Sigmoid colon (tissue), 7 donors: ENCODE measurements at regions of chr13 and their contacts with region 1.

Region 1: DNA sequence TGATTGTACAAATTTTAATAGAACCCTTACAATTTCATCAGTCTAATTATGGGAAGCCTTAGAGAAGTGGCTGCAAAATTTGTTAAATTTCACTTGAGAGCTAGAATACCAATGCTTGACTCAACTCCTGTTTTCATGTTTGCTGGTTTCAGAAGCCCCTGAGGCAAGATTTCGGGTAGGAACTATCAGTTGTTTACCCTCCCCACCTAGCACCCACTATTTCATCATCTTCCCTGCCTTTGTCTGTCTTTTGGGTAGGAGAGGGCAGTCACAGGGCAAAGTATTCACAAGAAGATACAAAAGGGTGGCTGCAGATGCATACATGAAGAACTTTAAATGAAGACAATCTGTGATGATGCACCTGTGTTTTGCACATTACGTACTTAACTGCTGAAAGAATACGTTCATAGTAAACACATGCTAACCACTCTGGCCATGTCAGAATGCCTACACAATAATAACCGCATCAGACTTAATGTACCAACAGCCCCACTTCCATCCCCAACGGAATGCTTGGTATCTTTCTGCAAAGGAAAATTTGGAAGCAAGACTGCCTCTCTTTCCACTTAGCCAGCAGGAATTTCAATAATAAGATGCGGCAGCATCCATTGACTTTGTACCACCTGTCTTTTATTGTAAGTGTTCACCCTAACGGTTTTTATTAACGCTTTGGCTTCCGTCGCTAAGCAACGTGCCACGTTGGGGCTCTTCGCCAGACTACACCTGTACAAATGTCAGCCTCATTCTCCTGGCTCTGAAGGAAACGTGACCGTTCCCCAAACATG is 30.4 kb downstream of the TPT1 start:
- DNase-seq: no peak
- H3K4me3 ChIP-seq: peak overlapping the region in 3 of 4 donors; percentile 39 to 55 (median 54)
- H3K27ac ChIP-seq: no peak overlapping the region
- H3K4me1 ChIP-seq: peaks cover 0 to 25% (median 22%) of the 10 kb centered on the region in 4 donors
- H3K27me3 ChIP-seq: no peaks in the 10 kb centered on the region
- CTCF ChIP-seq: no peak
- EP300 ChIP-seq: no peak
- POLR2A ChIP-seq: no peak

Region 2: GRCh38 chr13:45047394-45048310 is 262.9 kb before region 1 on chr13:
- intact Hi-C with region 1: loop called (anchors 1 kb)
- DNase-seq: peak; percentile 87
- H3K4me3 ChIP-seq: peak overlapping the region; percentile 23 to 47 (median 47)
- H3K27ac ChIP-seq: peak overlapping the region in 3 of 4 donors; percentile 12 to 53 (median 43)
- H3K4me1 ChIP-seq: peaks cover 0 to 13% (median 6%) of the 10 kb centered on the region in 4 donors
- H3K27me3 ChIP-seq: no peaks in the 10 kb centered on the region
- CTCF ChIP-seq: peak; percentile 87 to 95 (median 92)
- EP300 ChIP-seq: no peak
- POLR2A ChIP-seq: no peak

Region 3: DNA sequence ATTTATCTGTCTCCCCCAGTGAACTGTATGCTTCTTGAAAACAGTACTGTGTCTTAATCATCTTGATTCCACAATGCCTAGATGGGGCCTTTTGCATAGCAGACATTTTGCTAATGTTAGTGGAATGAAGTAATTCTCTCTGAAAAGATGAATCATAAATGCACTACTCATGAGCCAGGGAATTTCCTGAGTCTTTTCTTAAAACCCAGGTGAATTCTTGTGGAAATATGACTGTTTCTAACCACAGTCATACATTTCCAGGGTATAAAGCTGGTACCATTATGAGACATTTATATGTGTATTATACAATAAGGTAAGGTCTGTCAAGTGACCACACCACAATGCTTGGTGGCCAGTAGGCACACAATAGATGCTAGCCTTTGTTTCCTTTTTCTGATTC is 104.2 kb before region 1 on chr13:
- intact Hi-C with region 1: loop called (anchors 5 kb)
- DNase-seq: no peak
- H3K4me3 ChIP-seq: peak overlapping the region in 1 of 4 donors; percentile 24
- H3K27ac ChIP-seq: peak overlapping the region; percentile 66 to 86 (median 79)
- H3K4me1 ChIP-seq: peaks cover 0 to 48% (median 34%) of the 10 kb centered on the region in 4 donors
- H3K27me3 ChIP-seq: no peaks in the 10 kb centered on the region
- CTCF ChIP-seq: no peak
- EP300 ChIP-seq: no peak
- POLR2A ChIP-seq: no peak

Region 4: GRCh38 chr13:45269204-45269603 is 41.3 kb before region 1 on chr13:
- intact Hi-C with region 1: no loop called
- DNase-seq: no peak
- H3K4me3 ChIP-seq: no peak overlapping the region
- H3K27ac ChIP-seq: no peak overlapping the region
- H3K4me1 ChIP-seq: no peaks in the 10 kb centered on the region
- H3K27me3 ChIP-seq: no peaks in the 10 kb centered on the region
- CTCF ChIP-seq: no peak
- EP300 ChIP-seq: no peak
- POLR2A ChIP-seq: no peak

Region 5: DNA sequence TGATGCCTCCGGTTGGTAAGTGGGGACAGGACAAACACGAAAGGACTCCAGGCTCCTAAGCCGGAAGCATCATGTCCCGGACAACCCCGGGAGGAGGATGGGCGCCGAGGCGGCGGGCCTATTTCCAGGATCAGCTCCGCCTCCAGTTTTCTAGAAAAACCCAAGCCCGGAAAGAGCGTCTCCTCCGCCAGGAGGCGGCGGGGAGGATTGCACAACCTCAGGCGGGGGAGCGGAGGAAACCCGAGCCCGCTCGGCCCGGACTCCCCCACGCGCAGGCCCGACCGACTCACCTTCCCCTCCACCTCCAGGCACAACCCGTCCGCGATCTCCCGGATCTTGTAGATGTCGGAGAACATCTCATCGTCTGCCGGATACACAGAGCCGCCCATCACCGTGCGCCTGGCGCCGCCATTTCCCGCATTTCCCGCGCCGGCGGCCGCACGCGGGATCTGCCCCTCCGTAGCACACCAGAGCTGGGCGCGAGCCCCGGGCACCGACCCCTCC is 29.9 kb after region 1 on chr13:
- intact Hi-C with region 1: loop called (anchors 2 kb)
- DNase-seq: peak; percentile 97
- H3K4me3 ChIP-seq: peak overlapping the region; percentile 74 to 100 (median 98)
- H3K27ac ChIP-seq: peak overlapping the region; percentile 99 to 100 (median 100)
- H3K4me1 ChIP-seq: peaks cover 2 to 63% (median 52%) of the 10 kb centered on the region in 4 donors
- H3K27me3 ChIP-seq: no peaks in the 10 kb centered on the region
- CTCF ChIP-seq: peak in 3 of 4 experiments; percentile 55 to 72 (median 66)
- EP300 ChIP-seq: peak in 2 of 4 donors; percentile 75 to 85
- POLR2A ChIP-seq: peak in 1 of 2 donors; percentile 42